Endothelial cell of umbilical vein (primary cell): ENCODE measurements at regions of chr4 and their contacts with region 1.

Region 1: DNA sequence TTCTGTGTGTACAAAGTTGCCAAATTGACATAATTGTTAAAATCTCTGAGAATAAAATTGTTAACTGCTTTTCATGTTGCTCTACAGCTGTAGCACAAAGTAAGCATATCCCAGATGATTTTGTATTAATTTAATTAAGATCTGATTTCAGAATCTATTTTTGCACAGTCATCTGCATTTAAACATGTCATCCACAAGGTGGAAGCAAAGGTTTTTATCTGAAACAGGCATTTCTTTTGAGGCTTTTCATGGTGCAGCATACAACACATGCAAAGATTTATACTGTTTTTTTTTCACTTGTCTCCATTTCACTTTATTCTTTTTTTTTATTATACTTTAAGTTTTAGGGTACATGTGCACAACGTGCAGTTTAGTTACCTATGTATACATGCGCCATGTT is 51.2 kb downstream of the GC start:
- DNase-seq: peak; percentile 14
- H3K4me3 ChIP-seq: no peak overlapping the region
- H3K27ac ChIP-seq: no peak overlapping the region
- H3K4me1 ChIP-seq: no peaks in the 10 kb centered on the region
- H3K27me3 ChIP-seq: no peaks in the 10 kb centered on the region
- CTCF ChIP-seq: peak in 1 of 2 donors; percentile 7
- POLR2A ChIP-seq: no peak

Region 2: DNA sequence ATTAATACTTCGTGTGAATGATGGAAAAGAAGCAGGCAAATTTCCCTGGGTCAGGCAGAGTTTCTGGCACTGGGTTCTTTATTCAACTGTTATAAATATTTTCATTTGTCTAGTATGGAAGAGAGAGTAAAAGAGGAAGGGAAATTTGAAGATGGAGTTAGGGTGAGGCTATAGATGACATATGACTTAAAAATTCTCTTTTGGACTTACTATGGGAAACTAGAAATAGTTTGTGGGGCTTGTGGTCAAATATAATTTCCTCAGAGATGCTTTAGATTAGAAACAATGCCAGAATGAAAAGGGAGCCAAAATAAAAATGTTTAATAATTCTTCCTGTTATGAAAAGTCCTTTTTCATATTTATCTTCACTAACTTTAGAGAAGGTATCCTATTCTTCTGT is 52.0 kb before region 1 on chr4:
- CTCF ChIA-PET with region 1: no interaction called
- POLR2A ChIA-PET with region 1: no interaction called
- dilution Hi-C with region 1: no loop called
- intact Hi-C with region 1: no loop called
- DNase-seq: no peak
- H3K4me3 ChIP-seq: no peak overlapping the region
- H3K27ac ChIP-seq: no peak overlapping the region
- H3K4me1 ChIP-seq: no peaks in the 10 kb centered on the region
- H3K27me3 ChIP-seq: no peaks in the 10 kb centered on the region
- CTCF ChIP-seq: no peak
- POLR2A ChIP-seq: no peak

Region 3: DNA sequence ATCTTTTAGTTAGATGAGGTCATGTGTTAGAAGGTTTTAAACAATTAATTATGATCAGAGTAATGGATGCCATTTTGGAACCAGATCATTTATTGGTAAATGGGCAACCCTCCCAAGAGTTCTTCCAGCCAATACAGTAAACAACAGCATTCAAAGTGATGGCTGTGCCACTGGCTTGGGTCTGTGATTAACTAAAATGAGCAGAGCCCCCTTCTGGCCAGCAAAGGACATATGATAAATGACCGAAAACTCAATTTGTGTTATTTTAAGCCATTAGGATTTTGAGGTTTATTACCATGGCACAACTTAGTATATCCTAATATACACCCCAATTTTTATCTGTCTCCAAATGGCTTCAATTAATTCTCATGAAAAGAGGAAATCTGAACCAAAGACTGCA is 208.3 kb after region 1 on chr4:
- CTCF ChIA-PET with region 1: no interaction called
- POLR2A ChIA-PET with region 1: no interaction called
- dilution Hi-C with region 1: no loop called
- intact Hi-C with region 1: loop called (anchors 5 kb)
- DNase-seq: peak; percentile 10
- H3K4me3 ChIP-seq: no peak overlapping the region
- H3K27ac ChIP-seq: no peak overlapping the region
- H3K4me1 ChIP-seq: peaks cover 16% of the 10 kb centered on the region
- H3K27me3 ChIP-seq: no peaks in the 10 kb centered on the region
- CTCF ChIP-seq: peak; percentile 27 to 31
- POLR2A ChIP-seq: no peak

Region 4: GRCh38 chr4:72286185-72286584 is 553.5 kb after region 1 on chr4:
- CTCF ChIA-PET with region 1: interaction called, 6 read pairs
- POLR2A ChIA-PET with region 1: no interaction called
- dilution Hi-C with region 1: no loop called
- intact Hi-C with region 1: loop called (anchors 1 kb)
- DNase-seq: peak; percentile 10
- H3K4me3 ChIP-seq: no peak overlapping the region
- H3K27ac ChIP-seq: no peak overlapping the region
- H3K4me1 ChIP-seq: no peaks in the 10 kb centered on the region
- H3K27me3 ChIP-seq: no peaks in the 10 kb centered on the region
- CTCF ChIP-seq: no peak
- POLR2A ChIP-seq: no peak

Region 5: GRCh38 chr4:72468904-72469502 is 736.3 kb after region 1 on chr4:
- CTCF ChIA-PET with region 1: no interaction called
- POLR2A ChIA-PET with region 1: no interaction called
- dilution Hi-C with region 1: no loop called
- intact Hi-C with region 1: loop called (anchors 10 kb)
- DNase-seq: peak; percentile 46
- H3K4me3 ChIP-seq: no peak overlapping the region
- H3K27ac ChIP-seq: no peak overlapping the region
- H3K4me1 ChIP-seq: peaks cover 3% of the 10 kb centered on the region
- H3K27me3 ChIP-seq: no peaks in the 10 kb centered on the region
- CTCF ChIP-seq: peak in 1 of 2 donors; percentile 23
- POLR2A ChIP-seq: no peak